ENCODE measurements at regions of chr11 and their contacts with region 1.

Region 1: DNA sequence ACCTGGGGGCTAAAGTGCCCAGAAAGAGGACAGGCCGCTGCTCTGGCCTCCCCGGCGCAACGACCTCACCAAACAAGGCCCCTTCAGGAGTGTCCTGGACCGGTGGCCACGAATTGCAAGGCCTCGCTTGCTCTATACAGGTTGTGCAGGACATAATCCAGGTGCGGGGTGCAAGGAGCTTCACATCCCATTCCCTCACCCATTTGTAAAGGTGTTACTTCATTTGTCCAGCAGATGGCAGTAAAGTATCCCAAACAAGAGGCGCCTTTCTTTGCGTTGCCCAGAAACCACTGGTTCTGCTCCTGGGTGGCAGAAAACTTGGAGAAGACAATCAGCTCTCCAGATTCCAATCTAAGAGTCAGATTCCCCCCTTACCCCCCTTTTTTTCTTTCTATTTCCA is 35.9 kb upstream of the PRDM11 start:
- DNase-seq: no peak
- ATAC-seq: peak; percentile 88 to 94 (median 92)
- H3K4me3 ChIP-seq: no peak overlapping the region
- H3K27ac ChIP-seq: no peak overlapping the region
- H3K4me1 ChIP-seq: no peaks in the 10 kb centered on the region
- H3K27me3 ChIP-seq: peaks cover 0 to 4% of the 10 kb centered on the region in 2 donors
- CTCF ChIP-seq: peak; percentile 66 to 83 (median 77)
- POLR2A ChIP-seq: no peak

Region 2: GRCh38 chr11:45025716-45026492 is 84.7 kb before region 1 on chr11:
- intact Hi-C with region 1: no loop called
- DNase-seq: peak in 2 of 3 donors; percentile 64 to 75
- ATAC-seq: peak; percentile 81 to 88 (median 84)
- H3K4me3 ChIP-seq: no peak overlapping the region
- H3K27ac ChIP-seq: peak overlapping the region in 1 of 3 donors; percentile 63
- H3K4me1 ChIP-seq: no peaks in the 10 kb centered on the region
- H3K27me3 ChIP-seq: no peaks in the 10 kb centered on the region
- CTCF ChIP-seq: no peak
- POLR2A ChIP-seq: no peak

Region 3: GRCh38 chr11:45332276-45332934 is 221.8 kb after region 1 on chr11:
- intact Hi-C with region 1: loop called (anchors 5 kb)
- DNase-seq: no peak
- ATAC-seq: peak; percentile 81 to 90 (median 85)
- H3K4me3 ChIP-seq: no peak overlapping the region
- H3K27ac ChIP-seq: peak overlapping the region in 2 of 3 donors; percentile 3 to 39
- H3K4me1 ChIP-seq: peaks cover 0 to 3% (median 0%) of the 10 kb centered on the region in 4 donors
- H3K27me3 ChIP-seq: no peaks in the 10 kb centered on the region
- CTCF ChIP-seq: peak; percentile 50 to 83 (median 81)
- POLR2A ChIP-seq: no peak